ENCODE measurements at regions of chr21 and their contacts with region 1.

Region 1: DNA sequence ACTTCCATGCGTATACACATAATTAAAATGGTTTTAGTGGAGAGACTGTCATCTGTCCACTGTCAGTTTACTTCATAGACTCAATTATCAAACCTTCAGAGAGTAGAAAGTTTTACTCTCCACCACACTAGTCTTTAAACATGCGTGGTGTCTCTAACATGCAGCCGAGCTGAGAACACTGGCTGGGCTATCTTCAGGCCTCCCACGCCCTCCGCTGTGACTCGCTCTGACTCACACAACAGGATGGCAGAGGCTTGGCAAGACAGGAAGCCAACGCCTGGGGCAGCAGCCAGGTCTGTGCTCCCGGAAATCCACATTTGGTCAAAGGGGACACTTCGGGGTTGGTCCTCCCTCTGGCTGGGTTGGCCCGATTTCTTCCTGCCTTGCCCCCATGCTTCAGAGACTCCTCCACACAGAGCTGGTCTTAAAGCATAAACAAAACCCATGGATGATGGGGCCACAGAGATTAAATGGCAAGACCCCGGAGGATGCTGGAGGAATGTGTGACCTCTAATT is 22.7 kb upstream of the IFNGR2 start:
- DNase-seq: peak; percentile 50 to 92 (median 74)
- ATAC-seq: peak; percentile 74 to 77
- H3K4me3 Mint-ChIP-seq: peak overlapping the region; percentile 19 to 80 (median 68)
- H3K27ac Mint-ChIP-seq: peak overlapping the region; percentile 86 to 95 (median 91)
- H3K4me1 Mint-ChIP-seq: peaks cover 27 to 82% (median 61%) of the 10 kb centered on the region in 4 donors
- H3K27me3 Mint-ChIP-seq: no peaks in the 10 kb centered on the region

Region 2: DNA sequence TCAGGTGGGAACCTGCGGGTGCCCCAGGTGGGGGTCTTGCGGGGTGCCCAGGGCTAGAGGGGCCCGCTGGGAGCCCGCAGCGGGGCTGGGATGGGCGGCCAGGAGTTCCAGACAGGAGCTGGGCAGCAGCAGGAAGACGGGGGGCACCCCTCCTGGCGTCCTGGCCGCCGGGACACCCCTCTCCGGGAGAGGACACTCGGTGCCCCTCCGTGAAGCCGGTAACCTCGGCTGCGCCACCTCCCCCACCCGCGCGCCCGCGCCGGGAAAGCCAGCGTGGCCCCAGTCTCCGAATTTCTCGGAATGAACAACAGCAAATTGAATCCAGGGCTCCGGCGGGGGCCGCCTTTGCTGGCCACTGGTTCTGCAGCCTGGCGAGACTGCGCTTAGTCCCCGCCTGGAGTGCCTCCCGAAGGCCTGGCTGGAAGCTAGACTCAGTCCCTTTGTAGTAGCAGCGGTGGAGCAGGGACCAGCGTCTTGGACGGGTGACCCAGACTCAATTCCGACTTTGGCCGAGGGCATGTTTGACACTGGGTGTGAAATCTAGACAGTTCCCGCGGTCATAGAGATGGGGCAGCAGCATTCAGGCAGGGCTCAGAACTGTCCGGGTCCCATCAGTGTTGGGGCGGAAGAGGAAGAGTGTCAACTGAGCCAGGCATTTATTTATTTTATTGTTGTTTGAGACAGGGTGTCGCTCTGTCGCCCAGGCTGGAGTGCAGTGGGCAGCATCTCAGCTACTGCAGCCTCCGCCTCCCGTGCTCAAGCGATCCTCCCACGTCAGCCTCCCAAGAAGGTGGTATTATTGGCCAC is 23.4 kb after region 1 on chr21:
- POLR2A ChIA-PET with region 1: interaction called, 12 read pairs
- DNase-seq: peak in 5 of 10 donors; percentile 3 to 34 (median 9)
- ATAC-seq: peak; percentile 34 to 35
- H3K4me3 Mint-ChIP-seq: peak overlapping the region; percentile 91 to 97 (median 94)
- H3K27ac Mint-ChIP-seq: peak overlapping the region; percentile 82 to 96 (median 94)
- H3K4me1 Mint-ChIP-seq: peaks cover 15 to 71% (median 52%) of the 10 kb centered on the region in 4 donors
- H3K27me3 Mint-ChIP-seq: peaks cover 0 to 2% (median 0%) of the 10 kb centered on the region in 5 donors

Region 3: GRCh38 chr21:33421720-33422393 is 41.3 kb after region 1 on chr21:
- POLR2A ChIA-PET with region 1: no interaction called
- DNase-seq: no peak
- ATAC-seq: no peak
- H3K4me3 Mint-ChIP-seq: no peak overlapping the region
- H3K27ac Mint-ChIP-seq: peak overlapping the region in 2 of 10 donors; percentile 26 to 41
- H3K4me1 Mint-ChIP-seq: peaks cover 0 to 12% (median 2%) of the 10 kb centered on the region in 4 donors
- H3K27me3 Mint-ChIP-seq: no peaks in the 10 kb centered on the region

Region 4: GRCh38 chr21:33552093-33552998 is 171.8 kb after region 1 on chr21:
- POLR2A ChIA-PET with region 1: no interaction called
- DNase-seq: no peak
- ATAC-seq: peak; percentile 3 to 9
- H3K4me3 Mint-ChIP-seq: peak overlapping the region in 2 of 10 donors; percentile 10 to 14
- H3K27ac Mint-ChIP-seq: peak overlapping the region in 6 of 10 donors; percentile 7 to 75 (median 24)
- H3K4me1 Mint-ChIP-seq: peaks cover 25 to 63% (median 54%) of the 10 kb centered on the region in 4 donors
- H3K27me3 Mint-ChIP-seq: no peaks in the 10 kb centered on the region